T-cell (primary cell): ENCODE measurements at regions of chr20 and their contacts with region 1.

Region 1: GRCh38 chr20:63740627-63741354 is 1.2 kb downstream of the SLC2A4RG start:
- DNase-seq: peak in 15 of 35 experiments; percentile 30 to 64 (median 39)
- ATAC-seq: peak in 3 of 4 experiments; percentile 1 to 14 (median 1)
- H3K4me3 ChIP-seq: peak overlapping the region; percentile 54 to 74
- H3K4me3 Mint-ChIP-seq: peak overlapping the region; percentile 59 to 63 (median 63)
- H3K27ac ChIP-seq: peak overlapping the region; percentile 41
- H3K27ac Mint-ChIP-seq: no peak overlapping the region
- H3K4me1 ChIP-seq: peaks cover 13 to 44% of the 10 kb centered on the region in 2 experiments
- H3K4me1 Mint-ChIP-seq: peaks cover 9 to 13% (median 12%) of the 10 kb centered on the region in 3 donors
- H3K27me3 ChIP-seq: no peaks in the 10 kb centered on the region
- H3K27me3 Mint-ChIP-seq: no peaks in the 10 kb centered on the region

Region 2: GRCh38 chr20:63082301-63082805 is 658.4 kb before region 1 on chr20:
- CTCF ChIA-PET with region 1: no interaction called
- POLR2A ChIA-PET with region 1: no interaction called
- DNase-seq: peak in 20 of 35 experiments; percentile 15 to 49 (median 30)
- ATAC-seq: peak in 1 of 4 experiments; percentile 57
- H3K4me3 ChIP-seq: no peak overlapping the region
- H3K4me3 Mint-ChIP-seq: no peak overlapping the region
- H3K27ac ChIP-seq: no peak overlapping the region
- H3K27ac Mint-ChIP-seq: no peak overlapping the region
- H3K4me1 ChIP-seq: no peaks in the 10 kb centered on the region
- H3K4me1 Mint-ChIP-seq: no peaks in the 10 kb centered on the region
- H3K27me3 ChIP-seq: peaks cover 0 to 68% of the 10 kb centered on the region in 2 experiments
- H3K27me3 Mint-ChIP-seq: peaks cover 23 to 45% of the 10 kb centered on the region in 2 donors

Region 3: DNA sequence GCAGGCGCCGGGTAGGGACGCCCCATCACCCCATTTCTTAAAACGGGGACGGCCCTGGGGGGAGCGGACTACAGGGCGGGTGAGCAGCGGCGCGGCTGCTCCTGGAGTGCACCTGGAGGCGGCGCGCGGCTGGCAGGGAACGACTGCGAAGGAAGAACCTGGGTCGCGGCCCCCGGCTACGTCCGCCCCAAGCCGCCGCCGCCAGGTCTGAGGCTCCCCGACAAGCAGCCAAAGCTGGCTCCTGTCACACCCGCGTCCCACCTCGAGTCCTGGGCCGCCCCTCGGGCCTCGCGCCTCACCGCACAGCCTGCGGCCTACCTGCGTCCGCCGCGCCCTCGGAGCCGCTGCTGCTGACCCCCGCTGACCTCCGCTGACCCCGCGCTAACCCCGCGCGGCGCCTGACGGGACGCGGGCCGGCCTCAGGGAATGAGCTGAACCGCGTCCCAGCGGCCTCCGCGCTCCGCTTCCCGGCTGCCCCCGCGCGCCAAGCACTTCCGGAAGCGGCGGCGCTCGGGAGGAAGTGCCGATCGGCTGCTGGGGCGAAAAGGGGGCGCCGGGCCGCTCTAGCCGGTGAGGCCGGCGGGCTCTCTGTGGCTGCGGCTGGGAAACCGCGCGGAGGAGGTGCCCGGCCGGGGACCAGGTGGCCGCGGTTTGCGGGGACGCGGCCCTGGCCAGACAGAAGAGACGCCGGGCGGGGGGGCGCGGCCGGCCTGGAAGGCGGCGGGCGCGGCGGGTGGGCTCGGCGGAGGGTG is 33.1 kb before region 1 on chr20 and contains the starts of genes ARFRP1 and ZGPAT:
- CTCF ChIA-PET with region 1: interaction called in 1 of 2 experiments, 20 read pairs
- POLR2A ChIA-PET with region 1: interaction called in 1 of 2 experiments, 3 read pairs
- DNase-seq: peak; percentile 69 to 93 (median 77)
- ATAC-seq: peak; percentile 87 to 92 (median 92)
- H3K4me3 ChIP-seq: peak within 1 kb of the TSS; percentile 70 to 82
- H3K4me3 Mint-ChIP-seq: peak within 1 kb of the TSS; percentile 86 to 88 (median 87)
- H3K27ac ChIP-seq: peak within 1 kb of the TSS; percentile 55
- H3K27ac Mint-ChIP-seq: peak within 1 kb of the TSS; percentile 66 to 84
- H3K4me1 ChIP-seq: peaks cover 13 to 51% of the 10 kb centered on the region in 2 experiments
- H3K4me1 Mint-ChIP-seq: peaks cover 45 to 54% (median 47%) of the 10 kb centered on the region in 3 donors
- H3K27me3 ChIP-seq: no peaks in the 10 kb centered on the region
- H3K27me3 Mint-ChIP-seq: no peaks in the 10 kb centered on the region
- total RNA-seq, gene ARFRP1: 58.5 to 102 (median 99.5) TPM
- total RNA-seq, gene ZGPAT: 42.7 to 71.0 (median 59.0) TPM

Region 4: DNA sequence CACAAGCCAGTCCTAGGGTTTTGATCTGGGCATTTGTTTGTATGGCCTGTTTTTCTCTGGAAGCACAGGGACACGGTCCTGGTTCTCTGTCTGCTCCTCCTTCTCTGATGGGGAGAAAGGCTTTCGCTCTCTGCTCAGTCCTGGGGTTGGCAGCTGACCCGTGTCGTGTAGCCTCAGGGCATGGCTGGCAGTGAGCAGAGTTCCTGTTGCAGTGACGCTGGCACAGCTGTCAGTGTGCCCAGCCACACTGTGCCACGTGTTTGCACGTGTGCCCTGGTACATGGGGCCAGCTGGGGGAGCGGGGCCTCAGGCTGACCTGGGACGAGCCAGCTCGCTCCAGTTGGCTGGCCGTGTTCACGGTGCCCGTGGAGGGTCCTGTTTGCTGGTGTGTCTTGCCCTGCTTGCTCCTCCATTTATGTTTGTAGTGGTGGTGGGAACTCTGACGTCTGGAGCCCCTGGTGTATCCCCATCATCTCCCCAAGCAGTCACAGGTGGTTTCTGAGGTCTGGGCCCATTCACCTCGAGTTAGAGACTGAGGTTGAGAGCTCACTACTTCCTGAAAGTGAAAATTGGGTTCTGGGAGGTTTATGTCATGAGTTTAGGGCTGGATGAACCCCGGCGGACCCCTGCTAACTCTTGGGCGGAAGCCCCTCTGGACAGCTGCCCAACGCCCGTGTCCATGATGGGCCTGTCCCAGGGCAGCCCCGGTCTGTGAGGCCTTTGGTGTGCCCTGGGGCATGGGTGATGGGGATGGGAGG is 143.9 kb after region 1 on chr20:
- CTCF ChIA-PET with region 1: no interaction called
- POLR2A ChIA-PET with region 1: no interaction called
- DNase-seq: no peak
- ATAC-seq: no peak
- H3K4me3 ChIP-seq: no peak overlapping the region
- H3K4me3 Mint-ChIP-seq: no peak overlapping the region
- H3K27ac ChIP-seq: no peak overlapping the region
- H3K27ac Mint-ChIP-seq: no peak overlapping the region
- H3K4me1 ChIP-seq: peaks cover 0 to 3% of the 10 kb centered on the region in 2 experiments
- H3K4me1 Mint-ChIP-seq: no peaks in the 10 kb centered on the region
- H3K27me3 ChIP-seq: no peaks in the 10 kb centered on the region
- H3K27me3 Mint-ChIP-seq: no peaks in the 10 kb centered on the region